ENCODE measurements at regions of chr2 and their contacts with region 1.

Region 1: DNA sequence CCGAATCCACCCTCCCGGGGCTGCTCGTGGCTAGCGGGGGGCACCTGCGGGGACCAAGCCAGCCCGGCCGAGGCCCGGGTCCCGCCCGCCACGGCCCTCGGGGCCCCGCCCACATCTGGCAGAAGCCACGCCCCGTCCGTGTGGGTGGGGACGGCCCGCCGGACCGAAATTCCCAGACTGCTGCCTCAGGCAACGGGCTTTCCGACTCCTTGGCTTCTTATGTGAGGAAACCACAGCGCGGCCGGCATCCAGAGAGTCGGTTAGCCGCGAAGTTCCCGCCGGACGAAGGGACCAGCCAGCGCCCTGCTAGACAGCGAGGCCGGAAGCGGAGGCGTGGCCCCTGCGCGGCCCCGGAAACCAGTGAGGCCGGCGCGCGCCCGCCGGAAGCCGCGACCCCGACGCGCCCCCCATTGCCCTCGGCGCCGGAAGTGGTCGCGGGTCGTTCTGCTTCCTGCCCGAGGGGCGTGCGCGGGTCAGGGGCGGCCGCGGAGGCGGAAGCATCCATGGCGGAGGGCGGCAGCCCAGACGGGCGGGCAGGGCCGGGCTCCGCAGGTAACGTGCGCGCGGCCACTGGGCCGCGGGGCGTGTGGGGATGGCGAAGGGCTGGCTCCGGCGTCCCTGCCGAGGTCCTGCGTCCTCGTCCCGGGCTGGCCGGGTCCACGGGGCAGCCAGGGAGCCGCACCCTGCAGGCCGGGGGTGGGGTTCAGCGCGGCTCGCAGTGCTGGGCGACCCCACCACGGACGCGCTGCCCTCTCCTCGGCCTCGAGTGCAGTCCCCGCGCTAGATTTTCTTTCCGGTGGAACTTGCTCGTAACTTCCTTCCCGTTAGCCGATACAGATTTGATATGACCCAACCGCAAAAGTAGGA is at the start of gene ASB1:
- DNase-seq: peak; percentile 55 to 89 (median 76)
- ATAC-seq: peak; percentile 69
- H3K4me3 ChIP-seq: peak within 1 kb of the TSS; percentile 88
- H3K4me3 Mint-ChIP-seq: peak within 1 kb of the TSS; percentile 89
- H3K27ac ChIP-seq: peak within 1 kb of the TSS; percentile 74 to 75
- H3K27ac Mint-ChIP-seq: peak within 1 kb of the TSS; percentile 90
- H3K4me1 ChIP-seq: peaks cover 38% of the 10 kb centered on the region
- H3K4me1 Mint-ChIP-seq: peaks cover 56% of the 10 kb centered on the region
- H3K27me3 ChIP-seq: no peaks in the 10 kb centered on the region
- H3K27me3 Mint-ChIP-seq: no peaks in the 10 kb centered on the region
- CTCF ChIP-seq: no peak
- total RNA-seq, gene ASB1: 14.3 to 19.6 TPM

Region 2: DNA sequence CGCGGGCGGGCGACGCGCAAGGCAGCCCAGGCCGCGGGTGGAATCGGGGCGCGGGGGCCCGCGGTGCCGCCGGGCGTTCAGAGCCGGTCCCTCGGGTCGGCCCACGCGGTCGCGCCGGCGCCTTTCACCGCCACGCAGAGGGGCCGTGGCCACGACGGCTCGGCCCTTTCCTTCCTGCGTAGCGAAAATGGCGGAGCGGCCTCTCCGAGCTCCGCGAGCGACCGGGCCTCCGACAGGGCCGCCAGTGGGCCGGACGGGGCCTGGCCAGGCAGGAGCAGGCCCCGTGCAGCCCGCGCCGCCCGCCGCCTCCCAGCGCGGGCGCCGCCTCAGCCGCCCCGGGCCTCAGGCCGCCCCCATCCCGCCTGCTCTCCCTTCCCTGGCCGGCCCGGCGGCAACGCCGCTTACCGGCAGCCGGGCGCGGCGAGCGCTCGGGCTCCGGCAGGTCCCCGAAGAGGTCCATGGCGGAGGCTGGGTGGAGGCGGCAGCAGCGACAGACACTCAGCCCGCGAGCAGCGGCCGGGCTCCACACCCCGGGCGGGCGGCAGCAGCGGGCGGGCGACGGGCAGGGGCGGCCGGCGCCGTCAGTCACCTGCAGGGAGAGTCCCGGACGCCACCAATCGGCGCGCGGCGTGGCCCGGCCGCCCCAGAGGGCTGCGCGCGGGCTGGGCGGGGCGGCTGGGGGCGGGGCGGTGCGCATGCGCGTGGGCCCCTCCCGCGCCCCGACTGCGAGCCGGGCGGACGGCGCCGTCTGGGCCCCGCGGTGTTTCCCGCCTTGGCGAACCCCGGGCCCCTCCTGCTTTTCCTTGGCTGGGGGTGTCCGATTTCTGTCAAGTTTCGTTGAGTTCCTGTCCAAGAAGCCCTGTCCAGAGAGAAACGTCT is 223.5 kb before region 1 on chr2 and contains the start of gene ILKAP:
- CTCF ChIA-PET with region 1: no interaction called
- POLR2A ChIA-PET with region 1: no interaction called
- intact Hi-C with region 1: loop called in 1 of 2 experiments (anchors 10 kb)
- DNase-seq: peak; percentile 83 to 97 (median 89)
- ATAC-seq: peak; percentile 97
- H3K4me3 ChIP-seq: peak within 1 kb of the TSS; percentile 70
- H3K4me3 Mint-ChIP-seq: peak within 1 kb of the TSS; percentile 95
- H3K27ac ChIP-seq: peak within 1 kb of the TSS; percentile 77 to 79
- H3K27ac Mint-ChIP-seq: peak within 1 kb of the TSS; percentile 91
- H3K4me1 ChIP-seq: peaks cover 34% of the 10 kb centered on the region
- H3K4me1 Mint-ChIP-seq: peaks cover 40% of the 10 kb centered on the region
- H3K27me3 ChIP-seq: no peaks in the 10 kb centered on the region
- H3K27me3 Mint-ChIP-seq: no peaks in the 10 kb centered on the region
- CTCF ChIP-seq: no peak
- total RNA-seq, gene ILKAP: 133 to 143 TPM

Region 3: DNA sequence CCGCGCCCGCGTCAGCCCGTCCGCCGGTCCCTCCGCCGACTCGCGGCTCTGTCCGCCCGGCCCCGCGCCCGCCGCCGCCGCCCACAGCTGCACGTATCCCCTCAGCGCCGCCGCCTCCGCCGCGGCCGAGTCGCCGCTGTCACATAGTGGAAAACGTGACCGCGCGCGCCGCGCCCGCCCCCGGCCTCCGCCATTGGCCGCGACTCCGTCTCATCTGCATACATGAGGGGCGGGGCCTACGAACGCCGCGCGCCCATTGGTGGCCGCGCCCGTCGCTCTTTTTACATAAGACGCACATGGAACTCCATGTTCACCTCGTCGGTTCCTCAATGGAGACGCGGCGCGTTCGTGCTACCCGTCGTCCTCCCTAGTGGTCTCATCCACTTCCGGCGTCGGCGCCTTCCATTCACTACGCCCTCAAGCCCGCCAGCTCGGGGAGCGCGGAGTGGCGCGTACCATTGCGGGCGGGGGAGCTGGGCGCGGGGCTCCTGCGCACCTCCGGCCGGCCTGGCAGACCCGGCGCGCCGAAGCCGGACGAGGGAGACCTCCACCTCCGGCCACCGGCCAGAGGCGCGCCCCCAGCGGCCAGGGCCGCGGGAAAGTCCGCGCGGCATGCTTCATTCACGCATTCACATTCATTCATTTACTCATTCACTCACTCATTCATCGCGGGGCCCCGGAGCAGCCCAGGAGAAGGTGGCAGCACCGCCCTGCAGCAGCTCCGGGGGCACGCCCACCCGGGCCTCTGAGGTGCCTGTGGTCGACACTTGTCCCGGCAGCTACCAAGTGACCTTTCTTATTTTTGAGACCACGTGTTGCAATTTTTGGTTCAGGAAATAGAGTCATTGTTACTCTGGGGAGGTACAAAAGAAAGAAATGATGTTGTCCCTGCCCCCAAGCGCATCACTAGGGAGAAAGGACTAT is 137.9 kb before region 1 on chr2:
- CTCF ChIA-PET with region 1: no interaction called
- POLR2A ChIA-PET with region 1: no interaction called
- intact Hi-C with region 1: loop called in 1 of 2 experiments (anchors 2 kb)
- DNase-seq: peak; percentile 95 to 99 (median 97)
- ATAC-seq: peak; percentile 89
- H3K4me3 ChIP-seq: peak overlapping the region; percentile 97
- H3K4me3 Mint-ChIP-seq: peak overlapping the region; percentile 99
- H3K27ac ChIP-seq: peak overlapping the region; percentile 51 to 81
- H3K27ac Mint-ChIP-seq: peak overlapping the region; percentile 99
- H3K4me1 ChIP-seq: peaks cover 38% of the 10 kb centered on the region
- H3K4me1 Mint-ChIP-seq: peaks cover 36% of the 10 kb centered on the region
- H3K27me3 ChIP-seq: no peaks in the 10 kb centered on the region
- H3K27me3 Mint-ChIP-seq: no peaks in the 10 kb centered on the region
- CTCF ChIP-seq: no peak

Region 4: DNA sequence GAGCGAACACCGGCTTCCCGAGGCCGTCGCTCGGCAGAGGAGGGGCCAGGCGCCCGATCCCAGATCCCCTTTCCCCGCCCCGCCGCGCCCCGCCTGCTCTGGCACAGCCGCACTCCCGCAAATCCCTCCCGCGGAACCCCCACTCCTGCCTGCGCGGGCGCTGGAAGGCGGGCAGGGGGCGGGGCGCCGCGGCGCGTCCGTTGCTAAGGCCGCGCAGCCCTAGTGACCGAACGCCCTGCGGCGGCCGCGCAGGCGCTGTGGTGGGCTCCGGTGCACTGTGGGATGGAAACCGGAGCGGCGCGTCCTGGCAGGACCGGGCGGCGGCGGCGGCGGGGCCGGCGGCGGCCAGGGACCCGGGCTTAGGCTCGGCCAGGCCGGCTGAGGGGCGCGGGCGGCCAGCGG is 106.6 kb before region 1 on chr2 and contains the start of gene TRAF3IP1:
- CTCF ChIA-PET with region 1: no interaction called
- POLR2A ChIA-PET with region 1: no interaction called
- intact Hi-C with region 1: loop called in 1 of 2 experiments (anchors 2 kb)
- DNase-seq: peak; percentile 68 to 93 (median 81)
- ATAC-seq: peak; percentile 94
- H3K4me3 ChIP-seq: peak within 1 kb of the TSS; percentile 60
- H3K4me3 Mint-ChIP-seq: peak within 1 kb of the TSS; percentile 88
- H3K27ac ChIP-seq: no peak within 1 kb of the TSS
- H3K27ac Mint-ChIP-seq: no peak within 1 kb of the TSS
- H3K4me1 ChIP-seq: peaks cover 20% of the 10 kb centered on the region
- H3K4me1 Mint-ChIP-seq: peaks cover 26% of the 10 kb centered on the region
- H3K27me3 ChIP-seq: no peaks in the 10 kb centered on the region
- H3K27me3 Mint-ChIP-seq: no peaks in the 10 kb centered on the region
- CTCF ChIP-seq: no peak
- total RNA-seq, gene TRAF3IP1: 5.1 to 6.9 TPM

Region 5: DNA sequence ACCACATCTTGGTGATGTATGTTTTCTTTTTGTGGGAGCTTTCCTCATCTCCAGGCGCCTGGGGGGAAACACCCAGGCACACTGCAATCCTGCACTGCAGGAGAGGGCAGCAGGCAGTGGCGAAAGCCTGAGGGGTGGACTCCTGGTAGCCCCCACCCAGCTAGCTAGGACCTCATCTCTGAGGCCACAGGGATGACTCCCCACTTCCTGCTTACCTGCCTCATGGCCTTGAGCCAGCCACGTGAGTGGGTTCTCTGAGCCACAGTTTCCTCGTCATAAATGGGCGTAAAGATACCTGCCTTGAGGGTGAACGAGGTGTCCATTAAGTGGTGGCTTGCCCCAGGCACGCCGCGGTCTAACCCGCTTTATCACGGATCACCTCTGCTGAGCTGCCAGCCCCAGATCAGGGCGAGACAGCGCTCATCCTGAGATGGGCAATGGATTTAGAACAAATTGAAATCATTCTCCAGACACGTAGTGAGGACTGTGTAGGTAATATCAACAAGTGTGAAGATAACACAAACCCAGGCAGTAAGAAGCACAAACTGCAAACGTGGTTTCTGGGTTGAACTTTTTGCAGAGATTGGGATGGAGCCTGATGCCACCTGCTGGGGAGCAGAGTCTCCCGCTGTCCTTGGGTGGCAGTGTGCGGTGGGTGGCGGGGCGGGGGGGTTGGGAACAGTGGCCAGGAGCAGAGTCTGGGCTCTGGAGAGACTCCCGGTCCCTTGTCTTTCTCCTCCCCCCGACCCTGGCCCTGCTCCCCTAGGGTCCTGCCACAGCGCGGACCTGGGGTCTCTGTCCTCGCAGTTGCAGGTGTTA is 87.2 kb before region 1 on chr2:
- CTCF ChIA-PET with region 1: no interaction called
- POLR2A ChIA-PET with region 1: no interaction called
- intact Hi-C with region 1: no loop called
- DNase-seq: peak in 1 of 14 experiments; percentile 10
- ATAC-seq: no peak
- H3K4me3 ChIP-seq: no peak overlapping the region
- H3K4me3 Mint-ChIP-seq: no peak overlapping the region
- H3K27ac ChIP-seq: no peak overlapping the region
- H3K27ac Mint-ChIP-seq: no peak overlapping the region
- H3K4me1 ChIP-seq: no peaks in the 10 kb centered on the region
- H3K4me1 Mint-ChIP-seq: peaks cover 8% of the 10 kb centered on the region
- H3K27me3 ChIP-seq: no peaks in the 10 kb centered on the region
- H3K27me3 Mint-ChIP-seq: no peaks in the 10 kb centered on the region
- CTCF ChIP-seq: no peak

Region 6: GRCh38 chr2:240136013-240136670 is 1709.3 kb after region 1 on chr2 and contains the start of gene COPS9:
- CTCF ChIA-PET with region 1: no interaction called
- POLR2A ChIA-PET with region 1: no interaction called
- intact Hi-C with region 1: loop called in 1 of 2 experiments (anchors 10 kb)
- DNase-seq: peak; percentile 80 to 93 (median 86)
- ATAC-seq: peak; percentile 94
- H3K4me3 ChIP-seq: peak within 1 kb of the TSS; percentile 94
- H3K4me3 Mint-ChIP-seq: peak within 1 kb of the TSS; percentile 95
- H3K27ac ChIP-seq: peak within 1 kb of the TSS; percentile 24 to 40
- H3K27ac Mint-ChIP-seq: peak within 1 kb of the TSS; percentile 71
- H3K4me1 ChIP-seq: peaks cover 33% of the 10 kb centered on the region
- H3K4me1 Mint-ChIP-seq: peaks cover 33% of the 10 kb centered on the region
- H3K27me3 ChIP-seq: no peaks in the 10 kb centered on the region
- H3K27me3 Mint-ChIP-seq: no peaks in the 10 kb centered on the region
- CTCF ChIP-seq: no peak
- total RNA-seq, gene COPS9: 46.7 to 48.5 TPM